ENCODE measurements at regions of chr5 and their contacts with region 1.

Region 1: DNA sequence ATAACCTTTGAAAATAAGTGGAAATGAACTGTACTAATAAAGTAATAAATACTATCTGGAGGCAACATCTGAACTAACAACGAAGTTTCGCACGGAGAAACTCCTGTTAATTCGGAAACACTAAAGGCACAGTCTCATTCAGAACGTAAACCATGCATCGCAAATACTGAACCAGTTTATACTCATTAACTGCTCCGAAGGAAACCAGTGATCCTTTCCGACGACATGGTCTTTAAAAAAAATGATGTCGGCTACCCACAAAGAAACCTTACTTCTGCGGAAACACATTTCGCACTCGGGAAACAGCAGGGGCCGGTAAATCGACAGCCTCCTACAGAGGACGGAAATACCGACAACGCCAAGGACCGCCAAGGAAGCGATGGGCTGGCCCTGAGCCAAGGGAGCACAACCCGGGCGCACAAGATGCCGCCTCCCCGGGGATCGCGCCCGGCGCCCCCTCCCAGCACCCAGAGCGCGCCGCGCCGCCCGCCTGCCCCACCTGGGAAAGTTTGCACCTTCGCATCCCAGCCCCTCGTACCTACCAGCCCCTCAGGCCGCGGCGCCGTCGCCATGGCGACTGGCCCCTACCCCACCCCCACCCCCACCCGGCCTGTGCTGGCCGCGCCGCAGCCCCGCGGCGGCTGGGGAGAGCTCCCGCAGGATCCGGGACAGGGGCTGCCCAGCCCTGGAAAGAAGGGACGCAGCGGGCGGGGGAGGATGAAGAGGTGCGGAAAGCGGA is 732 bp downstream of the PRKAA1 start:
- DNase-seq: peak; percentile 83
- H3K4me3 Mint-ChIP-seq: peak overlapping the region; percentile 85
- H3K27ac Mint-ChIP-seq: peak overlapping the region; percentile 66
- H3K4me1 Mint-ChIP-seq: peaks cover 12% of the 10 kb centered on the region
- H3K27me3 Mint-ChIP-seq: no peaks in the 10 kb centered on the region
- CTCF ChIP-seq: no peak

Region 2: DNA sequence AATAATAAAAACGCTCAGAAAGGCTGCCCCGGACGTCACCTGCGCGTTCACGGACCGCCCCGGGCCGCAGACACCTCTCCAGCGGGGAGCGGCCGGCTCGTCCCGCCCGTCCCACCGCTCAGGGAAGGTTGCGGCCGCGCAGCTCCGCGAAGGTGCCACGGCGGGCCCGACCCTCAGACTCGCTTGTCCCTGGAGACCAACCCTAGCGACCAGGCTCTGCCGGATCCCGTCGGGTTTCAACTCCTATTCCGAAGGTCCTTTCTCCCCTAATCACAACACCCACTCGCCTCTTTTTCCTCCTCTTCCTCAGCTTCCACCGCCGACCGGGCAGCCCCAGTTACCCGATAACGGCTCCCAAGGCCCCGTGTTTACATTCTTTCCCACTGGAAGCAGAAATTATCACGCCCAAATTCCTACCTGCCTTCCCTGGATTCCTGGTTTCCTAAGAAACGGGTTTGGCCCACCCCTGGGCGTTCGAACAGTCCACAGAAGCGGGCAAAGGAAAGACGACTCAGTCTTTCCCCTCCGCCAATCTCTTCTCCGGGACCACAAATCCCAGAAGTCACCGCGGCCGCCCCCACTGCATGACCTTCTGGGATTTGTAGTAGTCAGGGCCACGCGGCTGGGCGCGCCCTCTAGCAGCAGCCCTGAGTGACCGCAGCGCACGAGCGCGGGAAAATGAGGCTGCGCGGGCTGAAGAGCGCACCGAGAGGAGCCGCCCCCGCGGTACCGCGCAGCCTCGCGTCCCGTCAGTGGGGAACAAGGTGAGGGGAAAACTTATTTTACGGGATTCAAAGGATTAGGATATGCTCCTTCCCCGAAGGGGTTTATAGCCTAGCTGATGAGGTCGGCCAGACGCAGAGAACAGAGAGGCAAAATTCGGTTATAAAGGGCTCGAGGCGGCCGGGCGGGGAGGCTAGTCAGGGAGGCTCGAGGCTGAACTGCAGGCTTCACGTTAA is 41.8 kb before region 1 on chr5 and contains the start of gene TTC33:
- CTCF ChIA-PET with region 1: interaction called, 3 read pairs
- intact Hi-C with region 1: loop called (anchors 1 kb)
- DNase-seq: peak; percentile 95
- H3K4me3 Mint-ChIP-seq: no peak within 1 kb of the TSS
- H3K27ac Mint-ChIP-seq: no peak within 1 kb of the TSS
- H3K4me1 Mint-ChIP-seq: no peaks in the 10 kb centered on the region
- H3K27me3 Mint-ChIP-seq: no peaks in the 10 kb centered on the region
- CTCF ChIP-seq: peak; percentile 45
- total RNA-seq, gene TTC33: 11.3 and 14.0 TPM in 2 replicates

Region 3: GRCh38 chr5:40775846-40776657 is 21.4 kb before region 1 on chr5:
- CTCF ChIA-PET with region 1: interaction called, 4 read pairs
- intact Hi-C with region 1: loop called (anchors 2 kb)
- DNase-seq: no peak
- H3K4me3 Mint-ChIP-seq: peak overlapping the region; percentile 48
- H3K27ac Mint-ChIP-seq: peak overlapping the region; percentile 63
- H3K4me1 Mint-ChIP-seq: peaks cover 28% of the 10 kb centered on the region
- H3K27me3 Mint-ChIP-seq: no peaks in the 10 kb centered on the region
- CTCF ChIP-seq: no peak

Measured in Calu3 (cell line).